ENCODE measurements at regions of chr16 and their contacts with region 1.

Region 1: DNA sequence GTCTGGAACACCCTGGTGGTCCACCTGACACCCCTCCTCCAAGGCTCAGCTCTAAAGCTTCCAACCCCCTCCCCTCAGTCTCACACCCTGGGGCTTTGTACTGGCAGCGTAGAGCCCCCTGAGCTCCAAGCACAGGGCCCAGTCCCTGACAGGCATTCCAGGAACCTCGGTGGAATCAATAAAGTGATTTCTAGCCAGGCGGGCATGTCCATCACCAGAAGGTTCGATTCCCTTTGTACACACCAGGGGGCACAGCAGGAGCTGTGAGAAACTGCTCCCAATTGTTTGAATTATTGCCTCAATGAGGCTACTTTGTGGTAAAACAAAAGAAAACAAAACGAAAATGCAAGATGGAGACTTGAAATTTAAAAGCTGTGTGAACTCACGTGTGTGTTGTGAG is 51.8 kb downstream of the SMPD3 start:
- DNase-seq: peak; percentile 51 to 73 (median 68)
- H3K4me3 ChIP-seq: no peak overlapping the region
- H3K4me3 Mint-ChIP-seq: peak overlapping the region in 1 of 8 donors; percentile 34
- H3K27ac ChIP-seq: no peak overlapping the region
- H3K27ac Mint-ChIP-seq: peak overlapping the region in 5 of 7 donors; percentile 48 to 92 (median 64)
- H3K4me1 ChIP-seq: peaks cover 29% of the 10 kb centered on the region
- H3K4me1 Mint-ChIP-seq: peaks cover 10 to 37% (median 22%) of the 10 kb centered on the region in 4 donors
- H3K27me3 ChIP-seq: no peaks in the 10 kb centered on the region
- H3K27me3 Mint-ChIP-seq: peaks cover 0 to 1% of the 10 kb centered on the region in 2 donors

Region 2: DNA sequence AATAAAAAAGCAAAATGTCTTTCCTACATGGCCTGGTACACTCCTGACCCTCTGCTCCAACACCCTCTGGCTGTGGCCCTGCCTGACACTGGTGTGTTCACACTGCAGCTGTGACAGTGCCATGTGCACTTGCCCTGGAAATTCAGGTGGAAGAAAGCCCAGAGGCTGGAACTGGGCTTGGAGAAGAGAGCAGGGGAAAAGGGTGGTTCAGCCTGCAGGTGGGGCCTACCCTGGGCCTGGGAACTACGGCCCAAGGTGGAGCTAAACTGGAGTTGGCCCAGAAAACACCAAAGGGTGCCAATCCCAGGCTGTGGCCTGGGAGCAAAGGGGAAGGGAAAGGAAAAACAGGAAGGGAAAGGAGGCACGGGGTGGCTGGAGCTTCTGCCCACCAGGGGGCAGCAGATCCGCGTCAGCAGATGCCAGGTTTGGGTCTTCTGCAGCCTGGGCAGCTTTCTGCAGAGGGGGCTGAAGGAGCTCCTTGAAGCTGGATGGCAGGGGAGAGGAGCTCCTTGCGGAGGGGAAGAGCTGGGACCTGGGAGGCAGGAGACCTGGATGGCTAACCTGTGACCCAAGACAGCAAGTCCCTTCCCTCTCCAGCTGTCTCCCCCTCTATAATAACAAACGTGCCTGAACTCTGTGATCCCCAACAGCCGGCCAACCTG is 849.6 kb before region 1 on chr16:
- CTCF ChIA-PET with region 1: no interaction called
- POLR2A ChIA-PET with region 1: no interaction called
- intact Hi-C with region 1: no loop called
- DNase-seq: peak; percentile 66 to 73 (median 69)
- H3K4me3 ChIP-seq: peak overlapping the region; percentile 41 to 48
- H3K4me3 Mint-ChIP-seq: peak overlapping the region; percentile 58 to 91 (median 82)
- H3K27ac ChIP-seq: peak overlapping the region; percentile 42
- H3K27ac Mint-ChIP-seq: peak overlapping the region; percentile 60 to 96 (median 95)
- H3K4me1 ChIP-seq: peaks cover 43% of the 10 kb centered on the region
- H3K4me1 Mint-ChIP-seq: peaks cover 29 to 65% (median 38%) of the 10 kb centered on the region in 4 donors
- H3K27me3 ChIP-seq: no peaks in the 10 kb centered on the region
- H3K27me3 Mint-ChIP-seq: no peaks in the 10 kb centered on the region

Region 3: DNA sequence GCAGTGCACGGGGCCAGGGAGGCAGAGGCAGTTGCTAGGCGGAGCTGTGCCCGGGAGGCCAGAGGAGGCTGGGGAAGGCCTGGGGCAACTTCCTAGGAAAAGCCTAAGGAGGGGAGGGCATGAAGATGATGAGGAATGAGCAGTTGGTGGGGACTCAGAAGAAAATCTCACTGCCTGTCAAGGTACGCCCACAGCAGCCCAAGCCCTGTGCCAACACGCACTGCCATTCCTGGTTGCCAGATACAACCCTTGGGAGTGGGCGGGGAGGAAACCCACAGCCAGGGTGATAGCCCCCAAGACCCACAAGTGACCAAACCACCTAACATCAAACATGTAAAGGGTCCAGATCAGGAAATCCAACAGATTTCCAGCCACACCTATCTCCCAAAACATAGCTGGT is 15.6 kb after region 1 on chr16:
- CTCF ChIA-PET with region 1: interaction called, 103 read pairs
- POLR2A ChIA-PET with region 1: interaction called, 22 read pairs
- intact Hi-C with region 1: no loop called
- DNase-seq: no peak
- H3K4me3 ChIP-seq: no peak overlapping the region
- H3K4me3 Mint-ChIP-seq: no peak overlapping the region
- H3K27ac ChIP-seq: no peak overlapping the region
- H3K27ac Mint-ChIP-seq: peak overlapping the region in 3 of 7 donors; percentile 3 to 65 (median 24)
- H3K4me1 ChIP-seq: peaks cover 26% of the 10 kb centered on the region
- H3K4me1 Mint-ChIP-seq: peaks cover 20 to 47% (median 34%) of the 10 kb centered on the region in 4 donors
- H3K27me3 ChIP-seq: no peaks in the 10 kb centered on the region
- H3K27me3 Mint-ChIP-seq: no peaks in the 10 kb centered on the region

Region 4: DNA sequence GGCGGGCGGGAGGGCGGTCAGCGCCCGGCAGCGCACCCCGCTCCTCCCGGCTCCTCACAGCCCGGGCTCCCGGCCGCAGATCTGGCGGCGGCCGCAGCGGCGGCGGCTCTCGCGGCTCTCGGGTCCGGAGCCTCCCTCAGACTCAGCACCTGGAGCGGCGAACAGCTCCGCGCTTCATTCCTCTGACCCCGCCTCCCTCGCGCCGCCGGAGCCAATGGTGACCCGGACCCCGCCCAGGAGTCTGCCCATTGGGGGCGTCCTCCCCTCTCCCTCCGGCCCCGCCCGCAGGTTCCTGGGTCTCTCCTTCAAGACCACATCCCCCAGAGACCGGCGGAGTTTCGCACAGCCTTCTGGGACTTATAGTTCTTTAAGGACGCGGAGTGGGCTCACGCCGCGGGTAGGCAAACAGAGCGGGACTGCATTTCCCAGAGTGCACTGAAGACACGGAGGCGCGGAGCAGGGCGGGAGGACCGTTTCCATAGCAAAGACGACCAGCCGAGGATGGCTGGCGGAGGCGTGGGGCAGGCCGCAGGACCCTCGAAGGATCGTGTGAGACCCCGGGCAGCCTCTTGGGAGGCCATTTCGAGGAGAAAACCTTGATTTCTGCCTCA is 52.0 kb after region 1 on chr16 and contains the start of gene SMPD3:
- CTCF ChIA-PET with region 1: interaction called, 13 read pairs
- POLR2A ChIA-PET with region 1: interaction called, 4 read pairs
- intact Hi-C with region 1: loop called (anchors 1 kb)
- DNase-seq: peak; percentile 97 to 99 (median 98)
- H3K4me3 ChIP-seq: peak within 1 kb of the TSS; percentile 47 to 61
- H3K4me3 Mint-ChIP-seq: peak within 1 kb of the TSS; percentile 70 to 89 (median 78)
- H3K27ac ChIP-seq: no peak within 1 kb of the TSS
- H3K27ac Mint-ChIP-seq: peak within 1 kb of the TSS in 6 of 7 donors; percentile 43 to 88 (median 65)
- H3K4me1 ChIP-seq: peaks cover 36% of the 10 kb centered on the region
- H3K4me1 Mint-ChIP-seq: peaks cover 15 to 34% (median 22%) of the 10 kb centered on the region in 4 donors
- H3K27me3 ChIP-seq: peaks cover 8% of the 10 kb centered on the region
- H3K27me3 Mint-ChIP-seq: peaks cover 12 to 14% of the 10 kb centered on the region in 2 donors
- total RNA-seq, gene SMPD3: 0.75 to 3.1 TPM

Region 5: GRCh38 chr16:68470461-68471150 is 74.1 kb after region 1 on chr16:
- CTCF ChIA-PET with region 1: interaction called, 18 read pairs
- POLR2A ChIA-PET with region 1: no interaction called
- intact Hi-C with region 1: no loop called
- DNase-seq: no peak
- H3K4me3 ChIP-seq: peak overlapping the region; percentile 22 to 58
- H3K4me3 Mint-ChIP-seq: peak overlapping the region; percentile 70 to 96 (median 85)
- H3K27ac ChIP-seq: peak overlapping the region; percentile 20
- H3K27ac Mint-ChIP-seq: peak overlapping the region; percentile 25 to 95 (median 85)
- H3K4me1 ChIP-seq: peaks cover 40% of the 10 kb centered on the region
- H3K4me1 Mint-ChIP-seq: peaks cover 26 to 48% (median 37%) of the 10 kb centered on the region in 4 donors
- H3K27me3 ChIP-seq: no peaks in the 10 kb centered on the region
- H3K27me3 Mint-ChIP-seq: no peaks in the 10 kb centered on the region

Region 6: DNA sequence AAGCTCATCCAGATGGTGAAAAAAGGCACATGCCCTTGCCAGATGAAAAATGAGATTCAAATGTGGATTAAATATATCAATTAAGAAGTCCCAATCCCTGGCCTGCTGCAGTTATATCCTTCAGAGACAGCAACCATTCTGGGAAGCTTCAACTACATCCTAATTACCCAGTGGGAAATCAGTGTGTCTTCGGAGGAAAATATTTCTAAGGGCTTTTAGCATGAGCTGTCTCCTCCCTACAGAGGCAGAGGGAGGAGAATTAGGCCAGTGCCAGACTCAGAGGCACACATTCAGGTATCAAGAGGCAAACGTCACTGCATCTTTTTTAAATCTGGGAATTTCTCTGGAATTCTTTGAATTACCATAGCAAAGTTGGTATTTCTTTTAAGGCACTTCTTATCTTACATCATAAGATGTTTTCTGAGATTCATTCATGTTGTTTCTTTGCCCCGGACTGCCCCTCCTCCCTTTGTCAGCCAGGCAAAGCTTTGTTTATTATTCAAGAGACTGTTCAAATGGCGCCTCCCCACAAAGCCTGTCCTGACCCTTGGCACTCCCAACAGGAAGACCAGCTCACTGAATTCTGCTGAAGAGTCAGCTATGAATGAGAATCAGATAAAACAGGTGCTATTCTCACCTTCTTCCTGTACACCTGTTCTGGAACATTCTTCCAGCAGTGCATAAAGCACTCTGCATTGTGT is 90.2 kb after region 1 on chr16:
- CTCF ChIA-PET with region 1: interaction called, 18 read pairs
- POLR2A ChIA-PET with region 1: no interaction called
- intact Hi-C with region 1: no loop called
- DNase-seq: no peak
- H3K4me3 ChIP-seq: no peak overlapping the region
- H3K4me3 Mint-ChIP-seq: no peak overlapping the region
- H3K27ac ChIP-seq: no peak overlapping the region
- H3K27ac Mint-ChIP-seq: peak overlapping the region in 1 of 7 donors; percentile 6
- H3K4me1 ChIP-seq: no peaks in the 10 kb centered on the region
- H3K4me1 Mint-ChIP-seq: peaks cover 0 to 4% (median 0%) of the 10 kb centered on the region in 4 donors
- H3K27me3 ChIP-seq: no peaks in the 10 kb centered on the region
- H3K27me3 Mint-ChIP-seq: peaks cover 0 to 2% of the 10 kb centered on the region in 2 donors

Region 7: GRCh38 chr16:68520649-68521086 is 124.2 kb after region 1 on chr16:
- CTCF ChIA-PET with region 1: interaction called, 414 read pairs
- POLR2A ChIA-PET with region 1: no interaction called
- intact Hi-C with region 1: loop called (anchors 1 kb)
- DNase-seq: peak; percentile 85 to 89 (median 86)
- H3K4me3 ChIP-seq: peak overlapping the region in 1 of 2 donors; percentile 40
- H3K4me3 Mint-ChIP-seq: peak overlapping the region; percentile 31 to 78 (median 50)
- H3K27ac ChIP-seq: no peak overlapping the region
- H3K27ac Mint-ChIP-seq: peak overlapping the region in 6 of 7 donors; percentile 71 to 95 (median 88)
- H3K4me1 ChIP-seq: peaks cover 9% of the 10 kb centered on the region
- H3K4me1 Mint-ChIP-seq: peaks cover 6 to 8% (median 7%) of the 10 kb centered on the region in 4 donors
- H3K27me3 ChIP-seq: no peaks in the 10 kb centered on the region
- H3K27me3 Mint-ChIP-seq: no peaks in the 10 kb centered on the region